Motor neuron (in vitro differentiated cells): ENCODE measurements at regions of chr4 and their contacts with region 1.

Region 1: DNA sequence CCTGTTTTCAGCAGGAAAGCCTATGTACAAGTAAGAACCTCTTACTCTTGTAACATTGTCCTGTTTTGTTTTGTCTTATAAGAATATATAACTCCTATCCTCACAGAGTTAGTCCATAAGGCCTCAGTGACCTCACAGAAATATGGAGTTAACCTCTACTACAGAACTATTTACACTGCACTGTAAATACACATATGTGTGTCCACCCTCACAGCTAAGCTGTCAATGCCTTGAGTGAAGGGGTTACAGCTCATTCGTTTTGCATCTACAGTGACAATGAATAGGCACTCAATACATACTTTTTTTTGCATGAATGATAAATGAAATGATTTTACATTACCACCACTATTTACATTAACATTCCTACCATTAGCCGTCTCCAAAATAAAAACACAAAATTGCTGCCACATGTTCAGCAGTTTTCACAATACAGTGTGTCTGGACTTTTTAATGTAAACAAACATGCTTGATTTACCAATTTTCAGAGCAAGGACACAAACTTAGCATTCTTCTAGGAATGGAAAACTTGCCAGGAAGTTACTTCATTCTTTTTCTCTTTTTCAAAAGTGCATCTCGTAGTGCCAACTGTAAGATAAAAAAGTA is 9.5 kb upstream of the NAAA start:
- ATAC-seq: peak in 3 of 8 experiments; percentile 51 to 95 (median 64)
- H3K4me3 ChIP-seq: no peak overlapping the region
- H3K27ac ChIP-seq: no peak overlapping the region
- H3K4me1 ChIP-seq: no peaks in the 10 kb centered on the region

Region 2: DNA sequence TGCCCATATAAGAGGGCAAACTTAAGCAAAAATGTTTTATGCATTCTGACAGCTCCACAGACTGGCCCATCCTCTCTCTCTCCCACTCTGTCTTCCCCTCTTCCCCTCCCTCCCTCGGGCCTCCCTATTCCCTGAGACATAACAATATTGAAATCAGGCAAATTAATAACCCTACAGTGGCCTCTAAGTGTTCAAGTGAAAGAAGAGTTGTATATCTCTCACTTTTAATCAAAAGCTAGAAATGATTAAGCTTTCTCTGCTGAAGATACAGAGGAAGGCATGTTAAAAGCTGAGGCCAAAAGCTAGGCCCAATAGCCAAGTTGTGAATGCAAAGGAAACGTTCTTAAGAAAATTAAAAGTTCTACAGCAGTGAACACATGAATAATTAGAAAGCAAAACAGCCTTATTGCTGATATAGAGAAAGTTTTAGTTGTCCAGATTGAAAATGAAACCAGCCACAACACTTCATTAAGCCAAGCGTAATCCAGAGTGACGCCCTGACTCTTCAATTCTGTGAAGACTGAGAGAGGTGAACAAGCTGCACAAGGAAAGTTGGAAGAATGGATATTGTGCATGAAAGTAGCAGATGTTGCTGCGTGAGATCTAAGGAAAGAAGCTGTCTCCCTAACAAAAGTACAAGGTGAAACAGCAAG is 171.1 kb before region 1 on chr4:
- in situ Hi-C with region 1: no loop called
- ATAC-seq: no peak
- H3K4me3 ChIP-seq: no peak overlapping the region
- H3K27ac ChIP-seq: no peak overlapping the region
- H3K4me1 ChIP-seq: no peaks in the 10 kb centered on the region

Region 3: GRCh38 chr4:76148142-76148865 is 198.0 kb after region 1 on chr4 and contains the start of gene NUP54:
- in situ Hi-C with region 1: loop called in 1 of 9 experiments (anchors 25 kb)
- ATAC-seq: peak; percentile 93 to 99 (median 98)
- H3K4me3 ChIP-seq: peak within 1 kb of the TSS; percentile 79 to 98 (median 92)
- H3K27ac ChIP-seq: peak within 1 kb of the TSS; percentile 83 to 92
- H3K4me1 ChIP-seq: peaks cover 4 to 15% of the 10 kb centered on the region in 2 donors
- total RNA-seq, gene NUP54: 21.3 to 54.3 (median 45.5) TPM

Region 4: GRCh38 chr4:76251441-76252270 is 301.3 kb after region 1 on chr4 and contains the start of gene FAM47E:
- in situ Hi-C with region 1: no loop called
- ATAC-seq: peak; percentile 96 to 99 (median 98)
- H3K4me3 ChIP-seq: peak within 1 kb of the TSS; percentile 32 to 47 (median 45)
- H3K27ac ChIP-seq: peak within 1 kb of the TSS in 1 of 2 donors; percentile 19
- H3K4me1 ChIP-seq: peaks cover 12% of the 10 kb centered on the region in 2 donors
- total RNA-seq, gene FAM47E: 1.8 to 14.8 (median 2.7) TPM